A673 (cell line): ENCODE measurements at regions of chr5 and their contacts with region 1.

Region 1: GRCh38 chr5:145681686-145682085 is 153.5 kb downstream of the PRELID2 start:
- DNase-seq: peak; percentile 89
- H3K4me3 ChIP-seq: no peak overlapping the region
- H3K27ac ChIP-seq: no peak overlapping the region
- H3K4me1 ChIP-seq: peaks cover 26% of the 10 kb centered on the region
- H3K27me3 ChIP-seq: no peaks in the 10 kb centered on the region
- CTCF ChIP-seq: peak; percentile 89

Region 2: DNA sequence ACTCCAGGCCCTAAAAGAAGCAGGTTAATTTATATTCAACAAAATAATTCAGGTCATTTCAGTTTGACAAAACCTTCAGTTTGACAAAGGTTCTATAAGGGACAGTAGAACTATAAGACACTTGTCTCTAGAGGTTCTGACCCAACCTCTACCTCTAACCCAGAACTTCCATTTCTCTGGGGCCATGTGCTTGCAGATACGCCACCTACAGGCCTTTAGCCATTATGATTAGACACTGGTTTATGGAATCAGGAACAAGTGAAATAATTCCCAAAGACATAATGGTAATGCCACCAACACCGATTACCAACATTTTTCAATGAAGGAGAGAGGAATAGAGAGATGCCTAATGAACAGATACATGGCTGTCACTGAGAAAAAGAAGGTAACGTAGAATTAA is 580.4 kb before region 1 on chr5:
- CTCF ChIA-PET with region 1: no interaction called
- POLR2A ChIA-PET with region 1: no interaction called
- intact Hi-C with region 1: no loop called
- DNase-seq: peak; percentile 22
- H3K4me3 ChIP-seq: no peak overlapping the region
- H3K27ac ChIP-seq: no peak overlapping the region
- H3K4me1 ChIP-seq: no peaks in the 10 kb centered on the region
- H3K27me3 ChIP-seq: no peaks in the 10 kb centered on the region
- CTCF ChIP-seq: peak; percentile 65

Region 3: DNA sequence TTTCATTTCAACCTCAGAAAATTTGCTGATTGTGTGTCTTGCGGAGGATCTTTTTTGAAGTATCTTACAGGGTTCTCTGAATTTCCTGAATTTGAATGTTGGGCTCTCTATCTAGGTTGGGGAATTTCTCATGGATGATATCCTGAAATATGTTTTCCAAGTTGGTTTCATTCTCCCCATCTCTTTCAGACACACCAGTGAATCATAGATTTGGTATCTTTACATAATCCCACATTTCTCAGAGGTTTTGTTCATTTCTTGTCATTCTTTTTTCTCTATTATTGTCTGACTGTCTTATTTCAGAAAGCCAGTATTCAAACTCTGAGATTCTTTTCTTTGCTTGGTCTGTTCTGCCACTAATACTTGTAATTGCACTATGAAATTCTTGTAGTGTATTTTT is 303.5 kb before region 1 on chr5:
- CTCF ChIA-PET with region 1: no interaction called
- POLR2A ChIA-PET with region 1: no interaction called
- intact Hi-C with region 1: no loop called
- DNase-seq: no peak
- H3K4me3 ChIP-seq: no peak overlapping the region
- H3K27ac ChIP-seq: no peak overlapping the region
- H3K4me1 ChIP-seq: no peaks in the 10 kb centered on the region
- H3K27me3 ChIP-seq: no peaks in the 10 kb centered on the region
- CTCF ChIP-seq: no peak

Region 4: GRCh38 chr5:145554399-145554798 is 127.3 kb before region 1 on chr5:
- CTCF ChIA-PET with region 1: no interaction called
- POLR2A ChIA-PET with region 1: no interaction called
- intact Hi-C with region 1: no loop called
- DNase-seq: no peak
- H3K4me3 ChIP-seq: no peak overlapping the region
- H3K27ac ChIP-seq: no peak overlapping the region
- H3K4me1 ChIP-seq: peaks cover 3% of the 10 kb centered on the region
- H3K27me3 ChIP-seq: no peaks in the 10 kb centered on the region
- CTCF ChIP-seq: no peak

Region 5: DNA sequence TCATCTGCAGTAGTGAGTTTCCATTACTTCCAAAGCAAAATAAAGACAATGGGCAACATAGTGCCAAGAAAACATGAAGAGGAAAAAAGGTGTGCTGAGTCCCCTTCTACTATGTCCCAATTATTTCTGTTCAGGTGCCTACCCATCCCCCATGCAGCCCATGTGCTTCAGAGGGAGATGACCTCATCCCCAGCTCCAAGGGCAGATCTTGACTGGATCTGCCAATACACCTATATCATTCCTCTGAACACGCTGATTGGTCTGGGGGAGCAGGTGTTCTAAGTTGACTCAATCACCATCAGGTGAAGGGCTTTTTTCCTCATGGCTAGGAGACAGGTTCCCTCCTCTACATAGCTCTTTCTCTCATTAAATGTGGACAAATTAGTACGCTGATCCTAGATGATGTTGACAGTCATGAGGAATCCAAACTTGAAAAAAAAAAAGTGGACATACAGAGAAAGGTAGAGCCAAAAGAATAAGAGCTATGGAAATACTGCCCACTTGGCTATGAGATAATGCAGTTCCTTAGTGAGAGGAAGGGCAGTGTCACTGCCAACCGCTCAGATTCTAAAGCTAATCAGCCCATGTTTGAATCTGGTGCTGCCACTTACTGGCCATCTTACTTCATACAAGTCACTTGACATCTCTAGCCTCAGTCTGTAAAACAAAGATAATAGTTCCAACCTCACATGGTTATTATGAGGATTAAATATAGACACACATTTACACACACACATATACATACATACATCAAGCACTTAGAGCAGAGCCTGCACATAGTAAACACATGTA is 130.3 kb after region 1 on chr5:
- CTCF ChIA-PET with region 1: interaction called, 5 read pairs
- POLR2A ChIA-PET with region 1: no interaction called
- intact Hi-C with region 1: loop called (anchors 5 kb)
- DNase-seq: peak; percentile 65
- H3K4me3 ChIP-seq: no peak overlapping the region
- H3K27ac ChIP-seq: no peak overlapping the region
- H3K4me1 ChIP-seq: peaks cover 11% of the 10 kb centered on the region
- H3K27me3 ChIP-seq: no peaks in the 10 kb centered on the region
- CTCF ChIP-seq: peak; percentile 63

Region 6: DNA sequence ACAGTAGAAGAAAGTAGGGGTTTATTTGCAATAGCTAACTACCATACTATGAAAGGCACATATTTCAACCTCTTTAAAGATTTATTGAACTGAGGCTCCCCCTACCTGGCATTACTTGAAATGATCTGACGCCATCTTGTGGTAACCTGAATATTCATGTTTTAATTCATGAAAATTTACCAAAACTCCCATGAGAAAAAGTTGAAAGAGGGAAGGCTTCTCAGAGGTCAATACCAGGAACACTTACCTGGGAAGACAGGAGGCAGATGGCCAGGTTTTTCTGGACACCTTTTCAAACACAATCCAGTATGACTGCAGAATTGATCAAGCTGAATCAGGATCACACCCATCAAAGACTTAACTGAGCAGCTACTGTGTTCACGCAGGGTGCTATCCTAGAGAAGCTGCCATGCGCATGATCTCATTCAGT is 144.1 kb after region 1 on chr5:
- CTCF ChIA-PET with region 1: no interaction called
- POLR2A ChIA-PET with region 1: no interaction called
- intact Hi-C with region 1: loop called (anchors 2 kb)
- DNase-seq: peak; percentile 83
- H3K4me3 ChIP-seq: no peak overlapping the region
- H3K27ac ChIP-seq: no peak overlapping the region
- H3K4me1 ChIP-seq: peaks cover 69% of the 10 kb centered on the region
- H3K27me3 ChIP-seq: no peaks in the 10 kb centered on the region
- CTCF ChIP-seq: peak; percentile 87